MCF 10A (cell line): ENCODE measurements at regions of chr4 and their contacts with region 1.

Region 1: GRCh38 chr4:26459054-26459755 is 31.1 kb downstream of the CCKAR start:
- DNase-seq: peak; percentile 65
- H3K4me3 Mint-ChIP-seq: peak overlapping the region; percentile 42
- H3K27ac Mint-ChIP-seq: no peak overlapping the region
- H3K4me1 Mint-ChIP-seq: peaks cover 4% of the 10 kb centered on the region
- H3K27me3 Mint-ChIP-seq: no peaks in the 10 kb centered on the region
- CTCF ChIP-seq: peak; percentile 49

Region 2: GRCh38 chr4:26441102-26441501 is 18.1 kb before region 1 on chr4:
- CTCF ChIA-PET with region 1: interaction called, 12 read pairs
- POLR2A ChIA-PET with region 1: no interaction called
- intact Hi-C with region 1: no loop called
- DNase-seq: peak; percentile 55
- H3K4me3 Mint-ChIP-seq: no peak overlapping the region
- H3K27ac Mint-ChIP-seq: no peak overlapping the region
- H3K4me1 Mint-ChIP-seq: peaks cover 6% of the 10 kb centered on the region
- H3K27me3 Mint-ChIP-seq: no peaks in the 10 kb centered on the region
- CTCF ChIP-seq: no peak

Region 3: DNA sequence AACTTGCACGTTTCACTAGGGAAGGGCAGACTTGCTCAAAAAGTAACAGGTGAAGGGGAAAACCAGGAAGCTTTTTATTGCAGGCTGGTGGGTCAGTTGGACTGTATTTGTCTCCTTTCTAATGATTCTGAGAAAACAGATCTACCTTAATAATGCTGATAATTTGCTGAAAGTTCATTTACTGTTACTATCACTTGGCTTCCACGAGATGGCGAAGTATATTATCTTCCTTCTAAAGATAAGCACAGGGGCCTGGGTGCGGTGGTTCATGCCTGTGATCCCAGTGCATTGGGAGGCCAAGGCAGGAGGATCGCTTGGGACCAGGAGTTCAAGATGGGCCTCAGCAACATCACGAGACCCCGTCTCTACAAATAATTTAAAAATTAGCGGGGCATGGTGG is 14.7 kb after region 1 on chr4:
- CTCF ChIA-PET with region 1: interaction called, 19 read pairs
- POLR2A ChIA-PET with region 1: interaction called, 3 read pairs
- intact Hi-C with region 1: no loop called
- DNase-seq: no peak
- H3K4me3 Mint-ChIP-seq: no peak overlapping the region
- H3K27ac Mint-ChIP-seq: no peak overlapping the region
- H3K4me1 Mint-ChIP-seq: peaks cover 11% of the 10 kb centered on the region
- H3K27me3 Mint-ChIP-seq: no peaks in the 10 kb centered on the region
- CTCF ChIP-seq: no peak

Region 4: DNA sequence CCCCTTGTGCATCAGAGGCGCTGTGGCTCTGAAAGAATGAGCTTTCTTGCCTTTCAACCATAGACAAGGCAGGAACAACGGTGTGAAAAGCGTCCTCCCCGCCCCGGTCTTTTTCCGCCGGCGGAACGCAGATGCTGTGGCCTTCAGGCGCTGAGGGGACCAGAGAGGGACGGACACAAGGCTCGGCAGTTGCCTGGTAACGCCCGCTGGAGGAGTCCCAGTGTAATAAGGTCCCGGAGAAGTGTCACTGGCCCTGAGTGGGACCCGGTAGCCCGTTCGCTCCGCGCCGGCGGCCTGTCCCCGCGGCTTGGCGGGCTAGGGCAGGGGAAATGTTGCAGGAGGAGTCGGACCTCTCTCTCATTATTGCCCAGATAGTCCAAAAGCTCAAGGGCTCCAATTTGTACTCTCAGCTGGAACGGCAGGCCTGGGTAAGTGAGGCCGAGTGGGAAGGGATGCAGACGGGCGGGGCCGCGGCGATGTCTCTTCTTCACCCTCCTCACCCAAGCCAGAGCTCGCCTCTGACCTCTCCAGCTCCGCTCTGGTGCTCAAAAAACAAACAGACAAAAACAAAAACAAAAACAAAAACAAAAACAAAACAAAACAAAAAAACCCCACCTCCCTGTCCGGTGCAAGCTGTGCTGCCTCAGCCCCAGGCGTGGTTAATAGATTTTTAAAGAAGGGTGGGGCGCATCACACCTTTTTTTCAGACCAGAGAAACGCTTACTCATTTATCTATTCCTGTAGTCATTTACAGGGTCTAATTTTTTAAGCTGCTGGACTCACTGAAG is 124.9 kb after region 1 on chr4 and contains the start of gene TBC1D19:
- CTCF ChIA-PET with region 1: interaction called, 3 read pairs
- POLR2A ChIA-PET with region 1: interaction called, 3 read pairs
- intact Hi-C with region 1: loop called (anchors 5 kb)
- DNase-seq: peak; percentile 87
- H3K4me3 Mint-ChIP-seq: peak within 1 kb of the TSS; percentile 92
- H3K27ac Mint-ChIP-seq: peak within 1 kb of the TSS; percentile 95
- H3K4me1 Mint-ChIP-seq: peaks cover 17% of the 10 kb centered on the region
- H3K27me3 Mint-ChIP-seq: no peaks in the 10 kb centered on the region
- CTCF ChIP-seq: no peak
- total RNA-seq, gene TBC1D19: 9.1 and 9.6 TPM in 2 replicates

Region 5: GRCh38 chr4:26590639-26591038 is 131.4 kb after region 1 on chr4:
- CTCF ChIA-PET with region 1: interaction called, 15 read pairs
- POLR2A ChIA-PET with region 1: no interaction called
- intact Hi-C with region 1: no loop called
- DNase-seq: peak; percentile 34
- H3K4me3 Mint-ChIP-seq: no peak overlapping the region
- H3K27ac Mint-ChIP-seq: no peak overlapping the region
- H3K4me1 Mint-ChIP-seq: peaks cover 22% of the 10 kb centered on the region
- H3K27me3 Mint-ChIP-seq: no peaks in the 10 kb centered on the region
- CTCF ChIP-seq: no peak

Region 6: DNA sequence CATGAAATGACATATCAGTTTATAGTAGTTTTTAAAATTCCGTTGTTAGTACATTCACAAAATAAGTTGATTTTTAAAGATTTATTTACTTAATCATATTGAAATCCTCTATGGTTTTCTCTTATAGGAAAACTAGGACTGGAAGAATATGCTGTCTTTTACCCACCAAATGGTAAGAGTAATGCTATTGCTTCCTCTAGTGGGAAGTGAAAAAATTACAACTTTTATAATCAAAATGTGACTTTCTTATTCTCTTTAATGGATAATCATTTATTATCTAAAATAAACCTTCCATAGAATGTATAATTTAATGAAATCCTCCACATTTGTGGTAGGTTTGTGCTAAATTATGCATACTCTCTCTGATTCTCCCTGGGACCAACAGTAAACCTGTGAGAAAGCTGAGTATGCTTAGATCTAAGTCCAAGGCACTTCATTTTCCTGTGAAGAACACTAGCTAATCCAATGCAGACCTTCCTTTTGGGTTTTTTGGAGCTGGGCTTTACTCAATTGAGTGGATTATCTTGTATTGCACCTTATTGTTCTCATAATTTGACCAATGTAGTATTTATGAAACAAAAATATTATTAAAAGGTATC is 260.8 kb after region 1 on chr4:
- CTCF ChIA-PET with region 1: interaction called, 124 read pairs
- POLR2A ChIA-PET with region 1: no interaction called
- intact Hi-C with region 1: loop called (anchors 1 kb)
- DNase-seq: peak; percentile 35
- H3K4me3 Mint-ChIP-seq: no peak overlapping the region
- H3K27ac Mint-ChIP-seq: no peak overlapping the region
- H3K4me1 Mint-ChIP-seq: peaks cover 8% of the 10 kb centered on the region
- H3K27me3 Mint-ChIP-seq: no peaks in the 10 kb centered on the region
- CTCF ChIP-seq: peak; percentile 67

Region 7: DNA sequence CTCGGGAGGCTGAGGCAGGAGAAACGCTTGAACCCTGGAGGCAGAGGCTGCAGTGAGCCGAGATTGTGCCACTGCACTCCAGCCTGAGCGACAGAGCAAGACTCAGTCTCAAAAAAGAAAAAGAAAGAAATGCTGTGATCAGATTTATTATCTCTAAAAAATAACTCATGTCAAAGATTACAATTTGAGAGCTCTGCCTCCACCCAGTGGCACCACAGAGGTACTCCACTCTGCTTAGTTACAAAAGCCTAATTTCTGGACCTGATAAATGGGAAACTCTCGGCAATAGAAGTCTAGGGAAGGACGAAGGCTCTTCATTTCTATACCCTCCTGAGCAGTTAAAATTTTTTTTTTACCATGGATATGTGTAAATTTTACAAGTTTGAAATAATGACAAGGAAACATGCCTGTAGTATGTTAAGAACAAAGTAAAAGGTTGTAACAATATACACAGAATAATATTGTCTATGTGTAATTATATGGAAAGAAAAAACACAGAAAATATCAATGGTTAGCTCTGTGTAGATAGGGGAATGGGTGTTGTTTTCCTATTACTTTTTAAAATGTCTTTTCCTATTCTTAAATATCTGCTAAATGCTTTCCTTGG is 551.2 kb after region 1 on chr4:
- CTCF ChIA-PET with region 1: interaction called, 68 read pairs
- POLR2A ChIA-PET with region 1: no interaction called
- intact Hi-C with region 1: loop called (anchors 1 kb)
- DNase-seq: peak; percentile 59
- H3K4me3 Mint-ChIP-seq: no peak overlapping the region
- H3K27ac Mint-ChIP-seq: peak overlapping the region; percentile 39
- H3K4me1 Mint-ChIP-seq: no peaks in the 10 kb centered on the region
- H3K27me3 Mint-ChIP-seq: no peaks in the 10 kb centered on the region
- CTCF ChIP-seq: peak; percentile 71